ENCODE measurements at regions of chr9 and their contacts with region 1.

Region 1: GRCh38 chr9:133133681-133134418 is 12.8 kb upstream of the RALGDS start:
- DNase-seq: peak; percentile 88 to 95 (median 91)
- ATAC-seq: peak; percentile 85 to 94 (median 90)
- H3K4me3 ChIP-seq: peak overlapping the region in 1 of 12 donors; percentile 7
- H3K27ac ChIP-seq: peak overlapping the region; percentile 83 to 97 (median 92)
- H3K4me1 ChIP-seq: peaks cover 25 to 85% (median 56%) of the 10 kb centered on the region in 12 donors
- H3K27me3 ChIP-seq: no peaks in the 10 kb centered on the region
- CTCF ChIP-seq: no peak
- POLR2A ChIP-seq: peak in 1 of 2 donors; percentile 52

Region 2: GRCh38 chr9:133115448-133116345 is 18.2 kb before region 1 on chr9:
- intact Hi-C with region 1: loop called in 2 of 10 experiments (anchors 1 to 2 kb)
- DNase-seq: peak in 3 of 5 donors; percentile 28 to 61 (median 30)
- ATAC-seq: no peak
- H3K4me3 ChIP-seq: peak overlapping the region in 1 of 12 donors; percentile 3
- H3K27ac ChIP-seq: peak overlapping the region; percentile 63 to 93 (median 81)
- H3K4me1 ChIP-seq: peaks cover 35 to 90% (median 85%) of the 10 kb centered on the region in 12 donors
- H3K27me3 ChIP-seq: no peaks in the 10 kb centered on the region
- CTCF ChIP-seq: no peak
- POLR2A ChIP-seq: no peak